ENCODE measurements at regions of chr9 and their contacts with region 1.

Region 1: DNA sequence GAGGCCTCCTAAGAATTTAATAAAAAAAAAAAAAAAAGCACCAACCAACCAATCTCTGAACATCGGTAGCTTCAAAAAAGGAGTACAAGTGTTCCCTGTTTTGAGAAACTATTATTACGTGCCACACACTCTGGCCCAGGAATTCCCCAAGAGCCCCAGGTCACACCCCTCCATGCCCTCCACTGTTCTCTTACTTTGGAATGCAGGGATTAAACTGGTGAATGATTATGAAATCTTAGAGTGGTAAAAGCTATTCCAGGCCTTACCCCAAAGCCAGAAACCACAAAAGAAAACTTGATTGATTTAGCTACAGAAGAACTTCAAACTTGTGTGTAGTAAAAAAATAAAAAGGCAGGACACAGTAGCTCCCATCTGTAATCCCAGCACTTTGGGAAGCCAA is 2.6 kb upstream of the PPP1R26 start:
- DNase-seq: no peak
- H3K4me3 ChIP-seq: no peak overlapping the region
- H3K27ac ChIP-seq: no peak overlapping the region
- H3K4me1 ChIP-seq: no peaks in the 10 kb centered on the region
- CTCF ChIP-seq: no peak

Region 2: DNA sequence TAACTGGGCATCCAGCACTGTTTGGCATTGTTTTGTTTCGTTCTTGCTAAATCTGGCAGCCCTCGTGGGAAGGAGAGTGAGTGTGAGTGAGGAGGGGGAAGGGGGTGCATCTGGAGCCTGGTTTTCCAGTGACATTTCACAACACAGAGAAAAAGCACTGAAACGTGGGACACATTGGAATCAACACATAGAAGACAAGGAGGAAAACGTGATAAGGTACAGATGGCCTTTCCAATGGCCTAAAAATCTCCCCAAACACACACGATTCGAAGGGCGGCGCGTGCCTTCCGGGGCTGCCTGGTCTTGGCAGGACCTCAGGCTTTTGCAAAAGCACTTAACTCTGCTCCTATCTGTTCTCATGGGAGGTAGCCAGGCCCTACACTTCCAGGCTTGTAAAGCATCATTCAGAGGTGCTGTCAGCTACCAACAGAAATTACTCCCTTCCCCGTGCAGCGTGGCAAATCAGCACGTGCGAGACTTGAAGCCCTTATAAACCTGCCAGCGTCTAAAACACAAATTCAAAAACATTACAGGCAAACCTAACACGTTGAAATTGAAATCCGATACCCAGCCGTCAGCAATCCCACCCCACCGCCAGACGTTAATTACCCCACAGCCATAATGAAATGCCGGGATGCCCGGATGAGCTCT is 260.1 kb before region 1 on chr9:
- CTCF ChIA-PET with region 1: no interaction called
- POLR2A ChIA-PET with region 1: no interaction called
- intact Hi-C with region 1: no loop called
- DNase-seq: no peak
- H3K4me3 ChIP-seq: no peak overlapping the region
- H3K27ac ChIP-seq: no peak overlapping the region
- H3K4me1 ChIP-seq: no peaks in the 10 kb centered on the region
- CTCF ChIP-seq: no peak

Region 3: DNA sequence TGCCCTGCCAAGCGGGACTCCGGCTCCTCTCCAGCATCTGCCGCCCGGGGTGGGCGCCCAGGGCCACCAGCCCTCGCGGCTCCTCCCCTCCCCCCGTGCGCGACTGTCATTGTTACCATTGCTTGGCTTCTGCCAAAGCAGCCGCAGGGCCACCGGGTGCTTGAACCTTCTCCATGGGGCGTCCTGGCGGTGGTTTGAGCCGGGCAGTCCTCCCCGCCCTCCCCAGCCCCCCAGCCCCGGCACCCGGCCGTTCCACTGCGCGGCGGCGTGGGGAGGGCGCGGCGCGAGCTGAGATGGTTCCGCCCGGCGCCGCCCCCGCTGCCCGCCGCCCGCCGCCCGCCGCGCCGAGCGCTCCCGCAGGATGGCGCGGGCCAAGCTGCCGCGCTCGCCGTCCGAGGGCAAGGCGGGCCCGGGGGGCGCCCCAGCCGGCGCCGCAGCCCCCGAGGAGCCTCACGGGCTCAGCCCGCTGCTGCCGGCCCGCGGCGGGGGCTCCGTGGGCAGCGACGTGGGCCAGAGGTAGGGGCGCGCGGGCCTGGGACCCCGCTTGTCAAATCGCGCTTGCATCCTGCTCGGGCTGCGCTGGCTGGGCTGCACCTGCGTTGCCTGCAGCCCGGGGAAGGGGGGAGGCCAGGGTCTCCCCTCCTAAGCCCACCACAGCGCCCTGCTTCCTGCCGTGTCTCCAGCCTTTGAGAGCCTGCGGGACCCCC is 259.4 kb after region 1 on chr9:
- CTCF ChIA-PET with region 1: interaction called, 19 read pairs
- POLR2A ChIA-PET with region 1: no interaction called
- intact Hi-C with region 1: no loop called
- DNase-seq: no peak
- H3K4me3 ChIP-seq: no peak overlapping the region
- H3K27ac ChIP-seq: no peak overlapping the region
- H3K4me1 ChIP-seq: no peaks in the 10 kb centered on the region
- CTCF ChIP-seq: no peak